ENCODE measurements at regions of chr19 and their contacts with region 1.

Region 1: DNA sequence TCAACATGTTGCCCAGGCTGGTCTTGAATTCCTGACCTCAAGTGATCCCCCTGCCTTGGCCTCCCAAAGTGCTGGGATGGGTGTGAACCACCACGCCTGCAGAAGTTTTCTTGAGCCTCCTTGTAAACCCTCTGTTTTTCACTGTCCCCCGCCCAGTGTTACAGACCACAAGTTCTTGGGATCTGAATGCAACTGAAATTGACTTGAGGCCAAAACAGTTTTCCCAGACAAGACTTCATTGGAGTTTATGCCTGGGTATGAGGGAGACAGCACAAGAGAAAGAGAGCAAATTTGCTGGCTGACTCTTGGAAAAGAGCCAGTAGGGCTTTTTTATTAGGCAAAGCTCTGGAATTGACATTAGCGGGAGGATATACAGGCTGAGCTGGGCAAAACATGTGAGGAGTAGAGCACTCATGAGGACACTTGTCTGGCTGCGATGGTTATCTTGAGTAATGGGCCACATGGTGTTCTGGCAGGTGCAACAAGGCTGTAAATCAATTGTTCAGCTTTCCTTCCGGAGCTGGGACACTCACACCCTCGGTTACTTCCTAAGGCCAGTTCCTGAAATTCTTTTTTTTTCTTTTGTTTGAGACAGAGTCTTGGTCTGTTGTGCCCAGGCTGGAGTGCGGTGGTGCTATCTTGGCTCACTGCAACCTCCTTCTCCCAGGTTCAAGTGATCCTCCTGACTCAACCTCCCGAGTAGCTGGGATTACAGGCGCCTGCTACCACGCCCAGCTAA is 12.7 kb upstream of the HNRNPL start:
- DNase-seq: no peak
- H3K4me3 Mint-ChIP-seq: no peak overlapping the region
- H3K27ac Mint-ChIP-seq: no peak overlapping the region
- H3K4me1 Mint-ChIP-seq: peaks cover 6% of the 10 kb centered on the region
- H3K27me3 Mint-ChIP-seq: no peaks in the 10 kb centered on the region
- CTCF ChIP-seq: no peak

Region 2: GRCh38 chr19:38849860-38850435 is 12.5 kb before region 1 on chr19 and contains the start of gene HNRNPL:
- CTCF ChIA-PET with region 1: interaction called, 3 read pairs
- POLR2A ChIA-PET with region 1: interaction called, 13 read pairs
- intact Hi-C with region 1: no loop called
- DNase-seq: peak; percentile 100
- H3K4me3 Mint-ChIP-seq: peak within 1 kb of the TSS; percentile 97
- H3K27ac Mint-ChIP-seq: peak within 1 kb of the TSS; percentile 99
- H3K4me1 Mint-ChIP-seq: peaks cover 18% of the 10 kb centered on the region
- H3K27me3 Mint-ChIP-seq: no peaks in the 10 kb centered on the region
- CTCF ChIP-seq: no peak
- total RNA-seq, gene HNRNPL: 288 and 421 TPM in 2 replicates

Region 3: GRCh38 chr19:38891771-38892170 is 29.3 kb after region 1 on chr19:
- CTCF ChIA-PET with region 1: interaction called, 17 read pairs
- POLR2A ChIA-PET with region 1: interaction called, 3 read pairs
- intact Hi-C with region 1: no loop called
- DNase-seq: no peak
- H3K4me3 Mint-ChIP-seq: no peak overlapping the region
- H3K27ac Mint-ChIP-seq: no peak overlapping the region
- H3K4me1 Mint-ChIP-seq: no peaks in the 10 kb centered on the region
- H3K27me3 Mint-ChIP-seq: no peaks in the 10 kb centered on the region
- CTCF ChIP-seq: no peak

Region 4: GRCh38 chr19:38899447-38900219 is 37.1 kb after region 1 on chr19 and contains the starts of genes NFKBIB and SIRT2:
- CTCF ChIA-PET with region 1: interaction called, 3 read pairs
- POLR2A ChIA-PET with region 1: interaction called, 18 read pairs
- intact Hi-C with region 1: no loop called
- DNase-seq: peak; percentile 100
- H3K4me3 Mint-ChIP-seq: peak within 1 kb of the TSS; percentile 88
- H3K27ac Mint-ChIP-seq: peak within 1 kb of the TSS; percentile 98
- H3K4me1 Mint-ChIP-seq: peaks cover 27% of the 10 kb centered on the region
- H3K27me3 Mint-ChIP-seq: no peaks in the 10 kb centered on the region
- CTCF ChIP-seq: no peak
- total RNA-seq, gene NFKBIB: 45.1 and 45.4 TPM in 2 replicates
- total RNA-seq, gene SIRT2: 35.5 and 37.4 TPM in 2 replicates